H1 (cell line): ENCODE measurements at regions of chr7 and their contacts with region 1.

Region 1: DNA sequence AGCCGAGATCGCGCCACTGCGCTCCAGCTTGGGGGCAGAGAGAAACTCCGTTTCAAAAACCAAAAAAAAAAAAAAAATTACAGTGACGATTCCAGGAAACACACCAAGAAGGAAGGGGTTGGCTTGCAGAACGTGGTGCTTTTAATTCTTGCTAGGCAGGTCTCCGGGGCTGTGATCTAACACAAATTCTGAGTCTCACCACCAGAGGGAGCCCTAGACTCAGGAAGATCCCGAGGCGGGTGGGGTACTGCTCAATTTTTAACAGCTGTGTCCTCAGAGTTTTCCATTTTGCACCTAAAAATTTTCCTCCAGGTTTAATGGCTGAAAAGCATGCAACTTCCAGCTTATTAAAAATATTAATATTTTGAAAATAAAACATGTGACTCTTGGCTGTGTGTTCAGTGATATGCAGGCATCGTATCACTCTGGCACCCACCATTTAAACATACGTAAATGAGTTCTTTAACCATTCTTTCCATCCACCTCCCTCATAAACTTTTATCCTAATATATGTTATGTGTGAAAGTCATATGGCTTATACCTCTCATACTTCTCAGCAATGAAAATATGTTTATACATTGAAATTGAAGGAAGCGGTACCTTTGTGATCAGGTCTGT is 26.5 kb upstream of the NUB1 start:
- DNase-seq: peak; percentile 13 to 87
- H3K4me3 ChIP-seq: no peak overlapping the region
- H3K27ac ChIP-seq: no peak overlapping the region
- H3K4me1 ChIP-seq: no peaks in the 10 kb centered on the region
- H3K27me3 ChIP-seq: no peaks in the 10 kb centered on the region
- CTCF ChIP-seq: peak; percentile 56 to 86 (median 80)
- EP300 ChIP-seq: no peak
- POLR2A ChIP-seq: no peak
- RAD21 ChIP-seq: peak; percentile 85 to 87

Region 2: DNA sequence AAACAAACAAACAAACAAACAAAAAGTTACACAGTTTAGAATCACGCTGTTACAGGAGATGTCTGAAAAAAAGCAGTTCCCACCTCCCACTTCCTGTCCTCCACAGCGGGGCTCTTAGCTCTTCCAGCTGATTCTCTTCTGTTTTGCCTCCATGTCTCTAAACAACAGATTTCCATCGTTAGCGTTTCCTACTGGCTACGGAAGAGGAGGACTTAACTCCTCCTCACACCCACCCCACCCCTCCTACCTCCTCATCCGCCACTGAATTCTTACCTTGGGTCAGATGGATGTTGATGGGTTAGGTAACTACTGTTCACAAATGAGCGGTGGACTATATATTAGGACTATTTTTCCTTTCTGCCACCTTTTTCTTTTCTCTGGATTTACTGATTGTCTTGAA is 10.3 kb before region 1 on chr7:
- CTCF ChIA-PET with region 1: interaction called, 37 read pairs
- POLR2A ChIA-PET with region 1: no interaction called
- DNase-seq: peak; percentile 15 to 43
- H3K4me3 ChIP-seq: peak overlapping the region; percentile 43 to 55 (median 50); a peak in 7 of 8 replicates
- H3K27ac ChIP-seq: no peak overlapping the region
- H3K4me1 ChIP-seq: peaks cover 0 to 3% (median 2%) of the 10 kb centered on the region in 4 experiments; a peak in 4 of 7 replicates
- H3K27me3 ChIP-seq: peaks cover 0 to 6% (median 2%) of the 10 kb centered on the region in 4 experiments; a peak in 4 of 7 replicates
- CTCF ChIP-seq: no peak
- EP300 ChIP-seq: no peak
- POLR2A ChIP-seq: 0 out of 3 replicates have a peak, but pooled peaks of 1 of the 2 experiments have one; percentile 36
- RAD21 ChIP-seq: no peak

Region 3: GRCh38 chr7:151327659-151328058 is 12.5 kb after region 1 on chr7:
- CTCF ChIA-PET with region 1: interaction called, 69 read pairs
- POLR2A ChIA-PET with region 1: no interaction called
- DNase-seq: no peak
- H3K4me3 ChIP-seq: no peak overlapping the region
- H3K27ac ChIP-seq: no peak overlapping the region
- H3K4me1 ChIP-seq: peaks cover 0 to 4% (median 1%) of the 10 kb centered on the region in 4 experiments; a peak in 4 of 7 replicates
- H3K27me3 ChIP-seq: no peaks in the 10 kb centered on the region
- CTCF ChIP-seq: no peak
- EP300 ChIP-seq: no peak
- POLR2A ChIP-seq: no peak
- RAD21 ChIP-seq: no peak

Region 4: GRCh38 chr7:151334628-151335027 is 19.5 kb after region 1 on chr7:
- CTCF ChIA-PET with region 1: interaction called, 75 read pairs
- POLR2A ChIA-PET with region 1: no interaction called
- DNase-seq: no peak
- H3K4me3 ChIP-seq: no peak overlapping the region
- H3K27ac ChIP-seq: no peak overlapping the region
- H3K4me1 ChIP-seq: peaks cover 0 to 4% (median 0%) of the 10 kb centered on the region in 4 experiments; a peak in 1 of 7 replicates
- H3K27me3 ChIP-seq: no peaks in the 10 kb centered on the region
- CTCF ChIP-seq: no peak
- EP300 ChIP-seq: no peak
- POLR2A ChIP-seq: no peak
- RAD21 ChIP-seq: no peak

Region 5: DNA sequence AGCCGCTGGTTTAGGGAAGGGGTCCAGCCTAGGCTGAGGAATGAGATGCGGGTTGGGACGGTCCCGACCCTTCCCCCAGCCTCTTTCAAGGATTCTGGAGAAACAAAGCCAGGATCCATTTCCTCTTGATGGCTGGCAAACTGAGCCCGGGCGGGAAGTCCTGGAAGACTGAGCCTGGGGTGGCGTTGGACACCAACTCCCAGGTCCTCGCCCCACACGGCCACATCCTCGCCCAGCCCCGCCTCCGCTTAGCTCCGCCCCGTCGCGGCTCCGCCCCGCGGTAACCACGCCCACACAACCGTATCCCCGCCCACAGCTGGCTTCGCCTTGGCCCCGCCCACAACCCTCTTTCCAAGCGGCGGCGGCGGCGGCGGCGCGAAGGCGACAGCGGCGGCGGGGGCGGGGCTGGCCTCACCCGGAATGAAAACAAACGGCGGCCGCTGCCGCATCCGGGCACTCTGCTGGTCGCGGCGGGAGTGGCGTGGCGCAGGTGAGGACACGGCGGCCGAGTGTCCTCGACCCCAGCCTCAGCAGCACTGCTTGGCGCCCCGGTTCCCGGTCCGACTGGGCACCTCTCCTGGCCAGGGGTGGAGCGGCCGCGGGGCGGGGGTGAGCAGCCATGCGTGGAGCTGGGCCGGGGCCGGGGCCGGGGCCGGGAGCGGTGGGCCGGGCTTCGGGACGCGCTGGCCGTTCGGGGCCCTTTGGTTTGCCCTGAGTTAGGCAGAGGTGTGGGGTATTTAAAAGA is 26.4 kb after region 1 on chr7 and contains the start of gene NUB1:
- CTCF ChIA-PET with region 1: interaction called, 75 read pairs
- POLR2A ChIA-PET with region 1: interaction called, 4 read pairs
- DNase-seq: peak; percentile 63 to 100
- H3K4me3 ChIP-seq: peak within 1 kb of the TSS; percentile 53 to 90 (median 67)
- H3K27ac ChIP-seq: peak within 1 kb of the TSS; percentile 55; the same call in 1 of the 2 replicates
- H3K4me1 ChIP-seq: no peaks in the 10 kb centered on the region; a peak in 2 of 7 replicates
- H3K27me3 ChIP-seq: no peaks in the 10 kb centered on the region
- CTCF ChIP-seq: no peak
- EP300 ChIP-seq: no peak
- POLR2A ChIP-seq: peak; percentile 75 to 76
- RAD21 ChIP-seq: no peak
- total RNA-seq, gene NUB1: 37.7 and 43.5 TPM in 2 replicates

Region 6: DNA sequence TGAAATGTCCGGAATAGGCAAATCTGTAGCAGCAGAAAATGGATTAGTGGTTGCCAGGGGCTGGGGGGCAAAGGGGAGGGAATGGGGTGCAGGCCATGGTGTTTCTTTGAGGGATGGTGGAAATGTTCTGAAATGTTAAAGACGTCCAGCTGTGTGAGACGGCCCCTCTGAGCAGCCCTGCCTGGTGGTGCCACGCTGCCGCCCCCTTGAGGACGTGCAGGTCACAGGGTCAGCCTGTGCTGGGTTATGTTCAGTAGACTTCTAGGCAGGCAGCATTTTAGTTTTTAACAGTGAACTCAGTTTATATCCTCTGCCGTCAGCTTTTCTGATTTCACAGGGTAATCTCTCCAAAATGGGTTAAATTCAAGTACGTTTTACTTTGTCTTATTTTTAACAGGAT is 35.9 kb after region 1 on chr7:
- CTCF ChIA-PET with region 1: interaction called, 161 read pairs
- POLR2A ChIA-PET with region 1: interaction called, 8 read pairs
- DNase-seq: peak in 1 of 2 experiments; percentile 77
- H3K4me3 ChIP-seq: no peak overlapping the region
- H3K27ac ChIP-seq: no peak overlapping the region
- H3K4me1 ChIP-seq: no peaks in the 10 kb centered on the region
- H3K27me3 ChIP-seq: no peaks in the 10 kb centered on the region
- CTCF ChIP-seq: peak; percentile 76 to 95 (median 79)
- EP300 ChIP-seq: no peak
- POLR2A ChIP-seq: no peak
- RAD21 ChIP-seq: peak; percentile 54 to 61

Region 7: GRCh38 chr7:151368136-151368571 is 53.0 kb after region 1 on chr7:
- CTCF ChIA-PET with region 1: interaction called, 12 read pairs
- POLR2A ChIA-PET with region 1: no interaction called
- DNase-seq: peak; percentile 58 to 91
- H3K4me3 ChIP-seq: no peak overlapping the region
- H3K27ac ChIP-seq: no peak overlapping the region
- H3K4me1 ChIP-seq: peaks cover 0 to 7% (median 2%) of the 10 kb centered on the region in 4 experiments; a peak in 3 of 7 replicates
- H3K27me3 ChIP-seq: no peaks in the 10 kb centered on the region; a peak in 1 of 7 replicates
- CTCF ChIP-seq: peak; percentile 95 to 100 (median 95)
- EP300 ChIP-seq: no peak
- POLR2A ChIP-seq: no peak
- RAD21 ChIP-seq: peak; percentile 86 to 90